B cell (primary cell): ENCODE measurements at regions of chr9 and their contacts with region 1.

Region 1: DNA sequence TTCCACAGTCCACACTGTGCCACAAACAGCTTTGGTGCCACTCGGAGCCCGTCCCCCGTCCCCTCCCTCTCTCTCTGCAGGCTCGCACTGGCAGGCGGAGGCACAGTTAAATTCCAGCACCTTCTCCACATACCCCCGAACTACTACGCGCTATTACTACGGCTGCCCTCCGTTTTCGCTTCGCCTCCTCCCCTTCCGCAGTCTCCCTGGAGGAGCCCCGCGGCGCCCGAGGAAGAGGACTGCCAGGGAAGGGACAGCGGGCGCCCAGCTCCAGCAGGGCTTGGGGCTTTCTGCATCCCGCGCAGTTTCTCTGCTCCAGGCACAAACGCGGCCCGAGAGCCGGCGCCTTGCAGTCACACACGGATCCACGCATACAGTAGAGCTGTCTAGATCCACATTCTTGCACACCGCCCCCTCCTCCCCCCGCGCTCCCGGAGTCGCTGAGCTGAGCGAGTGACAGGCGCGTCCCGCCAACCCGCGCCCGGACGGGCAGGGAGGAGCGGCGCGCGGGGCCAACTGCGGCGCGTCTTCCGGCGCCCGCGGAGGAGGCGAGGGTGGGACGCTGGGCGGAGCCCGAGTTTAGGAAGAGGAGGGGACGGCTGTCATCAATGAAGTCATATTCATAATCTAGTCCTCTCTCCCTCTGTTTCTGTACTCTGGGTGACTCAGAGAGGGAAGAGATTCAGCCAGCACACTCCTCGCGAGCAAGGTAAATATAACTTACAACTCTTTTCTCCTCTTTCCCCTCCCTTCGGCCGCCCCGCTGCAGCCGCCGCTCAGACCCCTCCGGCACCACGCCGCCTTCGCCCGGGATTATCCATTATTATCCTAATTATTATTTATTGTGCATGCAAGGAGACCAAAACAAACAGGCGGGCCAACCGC is at the start of gene SMARCA2:
- DNase-seq: peak; percentile 97
- ATAC-seq: peak; percentile 79
- H3K4me3 ChIP-seq: peak within 1 kb of the TSS; percentile 84 to 98 (median 89)
- H3K4me3 Mint-ChIP-seq: peak within 1 kb of the TSS; percentile 100
- H3K27ac ChIP-seq: peak within 1 kb of the TSS; percentile 91 to 94
- H3K27ac Mint-ChIP-seq: peak within 1 kb of the TSS; percentile 99
- H3K4me1 ChIP-seq: peaks cover 23 to 24% of the 10 kb centered on the region in 2 donors
- H3K4me1 Mint-ChIP-seq: peaks cover 27% of the 10 kb centered on the region
- H3K27me3 ChIP-seq: no peaks in the 10 kb centered on the region
- H3K27me3 Mint-ChIP-seq: peaks cover 20% of the 10 kb centered on the region
- CTCF ChIP-seq: no peak
- total RNA-seq, gene SMARCA2: 250 and 260 TPM in 2 replicates

Region 2: GRCh38 chr9:2024888-2025782 is 10.2 kb after region 1 on chr9:
- CTCF ChIA-PET with region 1: no interaction called
- POLR2A ChIA-PET with region 1: no interaction called
- intact Hi-C with region 1: loop called (anchors 1 kb)
- DNase-seq: no peak
- ATAC-seq: no peak
- H3K4me3 ChIP-seq: no peak overlapping the region
- H3K4me3 Mint-ChIP-seq: peak overlapping the region; percentile 15
- H3K27ac ChIP-seq: no peak overlapping the region
- H3K27ac Mint-ChIP-seq: no peak overlapping the region
- H3K4me1 ChIP-seq: peaks cover 55 to 67% of the 10 kb centered on the region in 2 donors
- H3K4me1 Mint-ChIP-seq: peaks cover 79% of the 10 kb centered on the region
- H3K27me3 ChIP-seq: no peaks in the 10 kb centered on the region
- H3K27me3 Mint-ChIP-seq: no peaks in the 10 kb centered on the region
- CTCF ChIP-seq: no peak

Region 3: DNA sequence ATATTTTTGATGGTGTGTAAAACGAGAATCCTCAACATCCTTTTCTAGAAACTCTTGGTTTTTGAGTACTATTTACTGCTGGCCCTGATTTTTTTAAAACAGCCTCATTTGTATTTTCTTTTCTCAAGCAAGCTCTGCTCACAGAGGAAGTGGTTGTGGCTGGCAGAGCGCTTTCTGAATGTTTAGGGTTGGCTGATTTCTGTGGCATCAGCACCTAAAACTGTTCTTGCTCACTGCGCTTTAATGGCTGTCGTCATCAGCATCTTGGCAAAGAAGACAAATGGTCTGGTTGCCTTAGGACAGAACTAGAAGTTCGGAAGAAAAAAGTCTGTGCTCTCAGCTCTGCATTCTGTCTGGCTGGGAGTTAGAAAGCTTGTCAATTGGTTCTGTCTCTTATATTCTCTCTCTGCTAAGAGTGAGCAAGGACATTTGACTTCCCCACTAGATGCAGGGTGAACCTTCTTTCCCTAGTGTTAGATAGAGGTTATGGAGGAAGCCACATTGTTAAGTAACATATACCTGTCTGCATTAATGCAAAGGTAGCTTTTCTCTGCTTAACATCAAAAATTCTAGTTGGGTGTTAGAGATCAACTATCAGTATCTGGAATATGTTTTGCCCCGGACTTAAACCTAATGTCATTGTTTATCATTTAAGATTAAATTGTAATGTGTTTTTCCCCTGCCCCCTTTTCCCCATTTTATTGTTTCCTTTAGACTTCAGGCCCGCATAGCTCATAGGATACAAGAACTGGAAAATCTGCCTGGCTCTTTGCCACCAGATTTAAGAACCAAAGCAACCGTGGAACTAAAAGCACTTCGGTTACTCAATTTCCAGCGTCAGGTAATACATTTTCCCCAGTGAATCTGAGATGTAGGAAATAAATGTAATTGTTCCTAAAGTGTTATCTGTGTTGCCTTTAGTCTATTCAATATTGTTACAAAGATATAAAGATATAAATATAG is 39.2 kb after region 1 on chr9:
- CTCF ChIA-PET with region 1: interaction called, 3 read pairs
- POLR2A ChIA-PET with region 1: interaction called, 10 read pairs
- intact Hi-C with region 1: loop called (anchors 1 kb)
- DNase-seq: peak; percentile 88
- ATAC-seq: peak; percentile 98
- H3K4me3 ChIP-seq: peak overlapping the region in 1 of 5 experiments; percentile 18
- H3K4me3 Mint-ChIP-seq: peak overlapping the region; percentile 61
- H3K27ac ChIP-seq: peak overlapping the region; percentile 61 to 76
- H3K27ac Mint-ChIP-seq: peak overlapping the region; percentile 77
- H3K4me1 ChIP-seq: peaks cover 17 to 19% of the 10 kb centered on the region in 2 donors
- H3K4me1 Mint-ChIP-seq: peaks cover 29% of the 10 kb centered on the region
- H3K27me3 ChIP-seq: no peaks in the 10 kb centered on the region
- H3K27me3 Mint-ChIP-seq: no peaks in the 10 kb centered on the region
- CTCF ChIP-seq: no peak

Region 4: GRCh38 chr9:2158111-2158610 is 143.2 kb after region 1 on chr9:
- CTCF ChIA-PET with region 1: no interaction called
- POLR2A ChIA-PET with region 1: no interaction called
- intact Hi-C with region 1: loop called (anchors 5 kb)
- DNase-seq: peak; percentile 67
- ATAC-seq: peak; percentile 72
- H3K4me3 ChIP-seq: peak overlapping the region; percentile 26 to 70 (median 55)
- H3K4me3 Mint-ChIP-seq: peak overlapping the region; percentile 85
- H3K27ac ChIP-seq: peak overlapping the region in 1 of 2 donors; percentile 75
- H3K27ac Mint-ChIP-seq: peak overlapping the region; percentile 81
- H3K4me1 ChIP-seq: peaks cover 22 to 32% of the 10 kb centered on the region in 2 donors
- H3K4me1 Mint-ChIP-seq: peaks cover 56% of the 10 kb centered on the region
- H3K27me3 ChIP-seq: no peaks in the 10 kb centered on the region
- H3K27me3 Mint-ChIP-seq: no peaks in the 10 kb centered on the region
- CTCF ChIP-seq: no peak

Region 5: DNA sequence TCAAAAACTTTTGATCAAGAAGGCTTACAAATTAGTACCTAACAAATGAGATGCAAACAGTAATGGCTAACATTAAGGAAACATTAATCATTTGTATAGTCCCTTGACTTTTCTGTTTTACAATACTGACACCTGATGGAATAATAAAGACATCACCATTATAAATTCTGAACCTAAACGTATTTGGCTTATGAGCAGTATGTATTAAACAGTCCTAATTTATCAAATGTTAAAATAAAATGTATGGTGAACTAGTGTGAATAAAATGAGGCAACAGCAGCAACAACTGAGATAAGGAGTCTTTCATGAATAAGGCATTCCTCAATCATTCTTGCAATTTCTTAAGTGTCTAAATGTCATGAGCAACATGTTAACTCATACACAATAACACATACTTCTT is 823.0 kb after region 1 on chr9:
- CTCF ChIA-PET with region 1: no interaction called
- POLR2A ChIA-PET with region 1: no interaction called
- intact Hi-C with region 1: loop called (anchors 10 kb)
- DNase-seq: no peak
- ATAC-seq: no peak
- H3K4me3 ChIP-seq: no peak overlapping the region
- H3K4me3 Mint-ChIP-seq: no peak overlapping the region
- H3K27ac ChIP-seq: no peak overlapping the region
- H3K27ac Mint-ChIP-seq: peak overlapping the region; percentile 42
- H3K4me1 ChIP-seq: peaks cover 9 to 12% of the 10 kb centered on the region in 2 donors
- H3K4me1 Mint-ChIP-seq: peaks cover 22% of the 10 kb centered on the region
- H3K27me3 ChIP-seq: no peaks in the 10 kb centered on the region
- H3K27me3 Mint-ChIP-seq: no peaks in the 10 kb centered on the region
- CTCF ChIP-seq: peak; percentile 17